AG04449 (cell line): ENCODE measurements at regions of chr7 and their contacts with region 1.

Region 1: DNA sequence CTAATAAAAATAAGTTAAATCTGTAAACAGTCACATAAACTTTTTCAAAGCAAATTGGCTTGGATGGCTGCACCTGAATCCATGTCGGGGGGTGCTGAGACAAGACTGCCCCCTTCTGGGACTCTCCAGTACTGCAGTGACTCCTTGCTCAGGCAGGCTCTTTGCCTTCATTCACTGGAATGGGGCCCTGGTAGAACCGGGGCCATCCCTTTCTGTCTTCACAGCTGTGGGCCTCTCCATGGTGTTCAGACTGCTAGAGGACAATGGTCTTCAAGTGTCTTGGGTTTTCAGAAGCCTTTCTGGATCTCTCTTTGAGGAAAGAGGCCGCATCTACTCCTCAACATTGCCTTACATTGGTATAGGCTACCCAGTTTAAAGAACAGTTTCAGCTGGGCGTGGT is 16.1 kb upstream of the IMPDH1 start:
- DNase-seq: no peak
- H3K4me3 ChIP-seq: no peak overlapping the region
- CTCF ChIP-seq: peak; percentile 89

Region 2: DNA sequence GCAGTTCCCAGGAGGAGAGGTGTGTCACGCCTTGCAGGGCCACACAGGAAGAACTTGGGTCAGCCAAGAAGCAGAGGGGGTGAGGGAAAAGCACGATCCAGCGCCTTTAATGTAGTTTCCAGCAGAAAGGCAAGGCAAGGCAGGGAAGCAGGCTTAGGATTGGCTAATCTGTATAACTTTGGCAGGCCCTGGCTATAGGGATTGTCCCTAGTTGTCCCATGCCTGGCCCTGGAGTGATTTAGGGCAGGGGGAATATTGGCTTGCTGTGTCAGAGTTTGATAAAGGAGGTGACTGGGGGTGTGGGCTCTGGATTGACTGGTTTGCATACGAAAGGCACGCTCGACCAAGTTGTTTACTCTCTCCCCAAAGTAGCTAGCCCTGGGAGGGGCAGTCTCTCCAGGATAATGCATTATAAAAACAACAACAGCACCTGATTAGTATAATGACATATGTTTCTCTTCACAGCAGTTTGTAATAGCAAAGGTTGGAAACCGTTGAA is 126.7 kb before region 1 on chr7:
- CTCF ChIA-PET with region 1: no interaction called
- POLR2A ChIA-PET with region 1: no interaction called
- DNase-seq: no peak
- H3K4me3 ChIP-seq: no peak overlapping the region
- CTCF ChIP-seq: no peak

Region 3: DNA sequence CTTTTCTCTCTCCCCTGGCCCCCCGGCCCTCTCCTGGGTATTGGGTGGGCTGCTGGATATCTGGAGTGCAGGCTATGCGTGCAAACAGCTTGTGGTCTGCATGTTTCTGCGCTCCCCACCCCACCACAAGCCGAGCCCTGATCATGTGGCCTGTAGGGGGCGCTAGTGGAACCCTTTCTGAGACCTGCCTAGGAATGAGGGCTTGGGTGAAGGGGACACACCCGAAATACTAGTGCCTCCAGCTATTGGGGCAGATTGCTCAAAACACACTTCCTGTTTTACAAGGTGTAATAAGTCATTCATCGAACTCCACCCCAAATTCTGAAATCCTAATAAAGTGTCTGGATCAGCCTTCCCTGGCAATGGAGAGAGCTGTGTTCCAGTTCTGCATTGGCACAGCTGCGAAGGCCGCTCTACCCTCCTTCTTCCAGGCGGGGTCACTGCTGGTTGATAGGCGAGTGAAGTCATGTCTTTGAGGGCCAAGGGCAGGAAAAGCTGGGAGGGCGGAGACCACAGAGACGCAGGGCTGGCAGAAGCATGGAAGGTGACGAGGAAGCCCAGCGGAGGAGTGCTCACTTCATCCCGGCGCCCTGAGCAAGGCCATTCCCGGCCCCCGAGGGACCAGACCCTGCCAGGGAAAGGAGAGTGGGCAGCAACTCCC is 44.6 kb before region 1 on chr7:
- CTCF ChIA-PET with region 1: interaction called, 20 read pairs
- POLR2A ChIA-PET with region 1: no interaction called
- DNase-seq: no peak
- H3K4me3 ChIP-seq: no peak overlapping the region
- CTCF ChIP-seq: peak; percentile 49

Region 4: GRCh38 chr7:128398016-128398840 is 27.6 kb before region 1 on chr7:
- CTCF ChIA-PET with region 1: interaction called, 229 read pairs
- POLR2A ChIA-PET with region 1: no interaction called
- DNase-seq: no peak
- H3K4me3 ChIP-seq: no peak overlapping the region
- CTCF ChIP-seq: peak; percentile 86

Region 5: GRCh38 chr7:128415217-128415785 is 10.5 kb before region 1 on chr7:
- CTCF ChIA-PET with region 1: interaction called, 196 read pairs
- POLR2A ChIA-PET with region 1: no interaction called
- DNase-seq: no peak
- H3K4me3 ChIP-seq: no peak overlapping the region
- CTCF ChIP-seq: no peak

Region 6: GRCh38 chr7:128443831-128444600 is 18.2 kb after region 1 on chr7:
- CTCF ChIA-PET with region 1: interaction called, 106 read pairs
- POLR2A ChIA-PET with region 1: no interaction called
- DNase-seq: no peak
- H3K4me3 ChIP-seq: no peak overlapping the region
- CTCF ChIP-seq: no peak

Region 7: DNA sequence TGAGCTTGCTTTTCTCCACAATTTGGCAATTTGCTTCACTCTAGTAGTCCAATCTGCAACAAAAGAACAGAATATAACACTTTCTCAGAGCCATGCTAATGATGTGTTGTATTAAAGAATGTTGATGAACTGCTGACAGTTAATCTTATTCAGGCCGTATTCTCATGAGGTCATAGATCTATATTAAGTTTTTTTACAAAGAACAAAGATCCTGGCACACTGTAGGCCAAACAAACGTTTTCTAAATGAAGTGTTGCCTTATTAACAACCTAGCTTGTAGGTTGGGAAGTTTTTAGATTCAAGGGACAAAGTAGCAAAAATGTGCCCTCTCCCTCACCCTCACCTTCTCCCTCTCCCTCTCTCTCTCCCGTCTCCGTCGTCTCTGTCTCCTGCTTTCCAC is 36.6 kb after region 1 on chr7:
- CTCF ChIA-PET with region 1: interaction called, 569 read pairs
- POLR2A ChIA-PET with region 1: interaction called, 3 read pairs
- DNase-seq: no peak
- H3K4me3 ChIP-seq: no peak overlapping the region
- CTCF ChIP-seq: no peak